MCF 10A (cell line): ENCODE measurements at regions of chr10 and their contacts with region 1.

Region 1: GRCh38 chr10:63707254-63707910 is 186.2 kb downstream of the REEP3 start:
- DNase-seq: peak; percentile 98
- H3K4me3 Mint-ChIP-seq: no peak overlapping the region
- H3K27ac Mint-ChIP-seq: peak overlapping the region; percentile 61
- H3K4me1 Mint-ChIP-seq: peaks cover 42% of the 10 kb centered on the region
- H3K27me3 Mint-ChIP-seq: no peaks in the 10 kb centered on the region
- CTCF ChIP-seq: no peak

Region 2: GRCh38 chr10:63217120-63217605 is 490.2 kb before region 1 on chr10:
- CTCF ChIA-PET with region 1: interaction called, 10 read pairs
- POLR2A ChIA-PET with region 1: no interaction called
- intact Hi-C with region 1: no loop called
- DNase-seq: peak; percentile 66
- H3K4me3 Mint-ChIP-seq: no peak overlapping the region
- H3K27ac Mint-ChIP-seq: peak overlapping the region; percentile 39
- H3K4me1 Mint-ChIP-seq: peaks cover 10% of the 10 kb centered on the region
- H3K27me3 Mint-ChIP-seq: no peaks in the 10 kb centered on the region
- CTCF ChIP-seq: peak; percentile 56

Region 3: GRCh38 chr10:63478564-63478963 is 228.8 kb before region 1 on chr10:
- CTCF ChIA-PET with region 1: no interaction called
- POLR2A ChIA-PET with region 1: no interaction called
- intact Hi-C with region 1: no loop called
- DNase-seq: no peak
- H3K4me3 Mint-ChIP-seq: no peak overlapping the region
- H3K27ac Mint-ChIP-seq: no peak overlapping the region
- H3K4me1 Mint-ChIP-seq: peaks cover 6% of the 10 kb centered on the region
- H3K27me3 Mint-ChIP-seq: no peaks in the 10 kb centered on the region
- CTCF ChIP-seq: no peak

Region 4: GRCh38 chr10:63681993-63682697 is 25.2 kb before region 1 on chr10:
- CTCF ChIA-PET with region 1: interaction called, 3 read pairs
- POLR2A ChIA-PET with region 1: interaction called, 10 read pairs
- intact Hi-C with region 1: no loop called
- DNase-seq: peak; percentile 88
- H3K4me3 Mint-ChIP-seq: peak overlapping the region; percentile 62
- H3K27ac Mint-ChIP-seq: peak overlapping the region; percentile 91
- H3K4me1 Mint-ChIP-seq: peaks cover 13% of the 10 kb centered on the region
- H3K27me3 Mint-ChIP-seq: no peaks in the 10 kb centered on the region
- CTCF ChIP-seq: no peak